Right ventricle myocardium superior (tissue), 1 donor: ENCODE measurements at regions of chr14 and their contacts with region 1.

Region 1: DNA sequence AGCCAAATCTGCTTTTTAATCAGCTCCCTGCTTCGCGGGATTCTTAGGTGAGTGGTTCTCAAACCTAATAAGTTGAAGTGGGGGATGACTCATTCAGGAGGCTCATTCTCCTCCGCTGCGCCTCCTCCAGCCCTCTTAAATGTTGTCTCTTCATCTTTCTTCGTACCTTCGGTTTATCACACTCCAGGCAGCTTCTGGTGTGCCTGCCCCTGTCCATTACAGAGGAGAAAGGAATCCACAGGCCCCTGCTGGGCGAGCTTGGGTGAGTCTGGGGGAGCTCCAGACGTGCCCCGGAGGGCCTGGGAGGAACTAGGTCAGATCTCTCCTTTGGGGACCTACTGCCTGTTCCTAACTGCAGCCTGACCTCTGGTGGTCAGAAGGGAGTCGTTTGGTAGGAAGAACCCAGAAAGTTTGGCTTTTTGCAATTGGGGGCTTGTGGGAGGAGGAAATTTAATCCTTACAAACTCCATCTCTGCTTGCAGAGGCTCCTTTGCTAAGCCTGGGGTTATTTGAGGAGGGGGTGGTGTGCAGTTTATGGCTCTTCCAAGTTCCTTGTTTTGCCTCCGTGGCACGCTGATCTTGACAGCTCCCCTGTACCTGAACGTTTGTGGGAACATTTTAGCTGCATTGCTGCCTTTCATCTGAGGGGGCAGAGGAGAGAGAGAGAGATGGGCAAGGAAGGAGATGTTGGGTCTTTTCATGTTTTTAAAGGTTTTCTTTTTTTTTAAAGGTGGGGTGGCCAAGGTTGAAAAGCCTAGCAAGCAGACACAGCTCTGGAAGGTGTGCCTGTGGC is 84.1 kb upstream of the GNG2 start:
- DNase-seq: peak; percentile 54
- ATAC-seq: peak; percentile 74

Region 2: GRCh38 chr14:51283402-51284085 is 492.8 kb before region 1 on chr14:
- intact Hi-C with region 1: loop called (anchors 2 kb)
- DNase-seq: no peak
- ATAC-seq: peak; percentile 95

Region 3: GRCh38 chr14:51651388-51652167 is 124.7 kb before region 1 on chr14 and contains the start of gene FRMD6:
- intact Hi-C with region 1: loop called (anchors 10 kb)
- DNase-seq: peak; percentile 93
- ATAC-seq: peak; percentile 95
- total RNA-seq, gene FRMD6: 7.4 TPM

Region 4: GRCh38 chr14:51744372-51745130 is 31.7 kb before region 1 on chr14:
- intact Hi-C with region 1: no loop called
- DNase-seq: no peak
- ATAC-seq: no peak